Activated T-helper 2 cell treated with anti-CD3 and anti-CD28 coated beads, Interferon-gamma antibody, Interleukin-2, Interleukin-4, amounts not matched to agents 10 μg/mL and 5 μg/mL and 100 μg/mL, durations not matched to agents 14 hours and 24 hours and 36 hours (primary cell): ENCODE measurements at regions of chr4 and their contacts with region 1.

Region 1: DNA sequence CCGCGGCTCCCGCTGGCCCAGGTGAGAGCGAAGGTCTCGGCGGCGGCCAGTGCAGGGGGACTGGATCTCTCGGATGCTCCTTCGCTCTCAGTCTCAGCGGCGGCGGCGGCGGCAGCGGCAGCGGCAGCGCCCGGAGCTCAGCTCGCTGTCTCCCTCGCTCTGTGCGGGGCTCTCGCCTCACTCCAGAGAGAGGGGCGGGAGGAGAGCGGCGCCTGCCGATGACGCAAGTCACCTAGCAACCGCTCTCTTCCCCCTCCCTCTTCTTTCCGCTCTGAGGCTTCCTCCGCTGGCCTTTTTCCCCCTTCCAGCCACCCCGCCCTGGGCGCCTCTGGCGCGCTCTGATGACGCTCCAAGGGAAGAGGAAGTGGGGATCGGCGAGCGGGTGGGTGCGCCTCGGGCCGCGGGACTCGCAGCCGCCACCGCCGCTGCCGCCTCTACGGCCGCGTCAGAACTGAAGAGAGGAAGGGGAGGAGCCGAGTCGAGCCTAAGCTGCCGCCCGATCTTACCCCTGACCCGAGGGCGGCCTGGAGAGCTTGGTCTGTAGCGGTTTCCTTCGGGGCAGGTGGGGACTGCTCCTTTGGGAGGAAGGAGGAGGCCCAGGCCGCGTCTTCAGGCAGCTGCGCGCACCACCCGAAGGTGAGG is at the start of gene FBXW7:
- DNase-seq: peak; percentile 100
- H3K4me3 Mint-ChIP-seq: peak within 1 kb of the TSS; percentile 97
- H3K27ac Mint-ChIP-seq: peak within 1 kb of the TSS; percentile 99
- H3K4me1 Mint-ChIP-seq: peaks cover 50% of the 10 kb centered on the region
- H3K27me3 Mint-ChIP-seq: no peaks in the 10 kb centered on the region
- total RNA-seq, gene FBXW7: 37.8 and 47.3 TPM in 2 replicates

Region 2: DNA sequence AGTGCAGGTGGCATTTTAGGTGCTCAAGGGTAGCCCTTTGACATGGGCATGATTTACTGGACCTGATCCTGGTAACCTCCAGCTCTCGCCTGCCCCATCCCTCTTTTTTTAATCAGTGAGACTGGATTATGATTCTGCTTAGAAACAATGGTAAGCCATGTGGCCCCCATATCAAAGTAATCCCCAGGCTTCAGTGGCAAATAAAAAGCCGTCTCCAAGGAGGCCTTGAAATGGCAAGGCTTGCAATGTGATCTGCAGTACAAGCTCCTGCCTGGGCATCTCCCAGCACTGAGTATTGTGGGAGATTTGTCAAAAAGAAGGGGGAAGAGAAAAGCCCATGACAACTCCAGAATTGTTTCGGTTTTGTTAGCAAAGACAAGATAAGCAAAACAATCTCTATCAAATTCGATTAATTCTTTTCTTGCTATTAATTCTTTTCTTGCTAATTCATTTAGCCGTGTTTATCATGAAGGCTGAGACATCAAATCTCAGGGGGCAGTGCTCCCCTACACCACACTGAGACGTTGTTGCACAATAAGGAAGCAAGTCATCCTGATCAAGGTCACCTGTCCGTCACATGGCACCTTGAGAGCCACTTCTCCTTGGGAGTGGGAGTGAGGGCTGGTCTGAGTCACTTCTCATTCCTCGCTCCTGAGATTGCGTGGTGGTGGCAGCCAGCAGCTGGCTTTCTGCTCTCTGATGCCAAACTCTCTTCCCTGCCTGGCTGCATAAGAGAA is 462.5 kb before region 1 on chr4:
- intact Hi-C with region 1: no loop called
- DNase-seq: no peak
- H3K4me3 Mint-ChIP-seq: no peak overlapping the region
- H3K27ac Mint-ChIP-seq: no peak overlapping the region
- H3K4me1 Mint-ChIP-seq: peaks cover 7% of the 10 kb centered on the region
- H3K27me3 Mint-ChIP-seq: no peaks in the 10 kb centered on the region

Region 3: GRCh38 chr4:152454398-152455011 is 81.5 kb before region 1 on chr4:
- intact Hi-C with region 1: loop called (anchors 2 kb)
- DNase-seq: no peak
- H3K4me3 Mint-ChIP-seq: no peak overlapping the region
- H3K27ac Mint-ChIP-seq: no peak overlapping the region
- H3K4me1 Mint-ChIP-seq: peaks cover 27% of the 10 kb centered on the region
- H3K27me3 Mint-ChIP-seq: no peaks in the 10 kb centered on the region

Region 4: GRCh38 chr4:152500800-152501434 is 35.1 kb before region 1 on chr4:
- intact Hi-C with region 1: loop called (anchors 5 kb)
- DNase-seq: peak; percentile 30
- H3K4me3 Mint-ChIP-seq: no peak overlapping the region
- H3K27ac Mint-ChIP-seq: no peak overlapping the region
- H3K4me1 Mint-ChIP-seq: peaks cover 21% of the 10 kb centered on the region
- H3K27me3 Mint-ChIP-seq: no peaks in the 10 kb centered on the region

Region 5: DNA sequence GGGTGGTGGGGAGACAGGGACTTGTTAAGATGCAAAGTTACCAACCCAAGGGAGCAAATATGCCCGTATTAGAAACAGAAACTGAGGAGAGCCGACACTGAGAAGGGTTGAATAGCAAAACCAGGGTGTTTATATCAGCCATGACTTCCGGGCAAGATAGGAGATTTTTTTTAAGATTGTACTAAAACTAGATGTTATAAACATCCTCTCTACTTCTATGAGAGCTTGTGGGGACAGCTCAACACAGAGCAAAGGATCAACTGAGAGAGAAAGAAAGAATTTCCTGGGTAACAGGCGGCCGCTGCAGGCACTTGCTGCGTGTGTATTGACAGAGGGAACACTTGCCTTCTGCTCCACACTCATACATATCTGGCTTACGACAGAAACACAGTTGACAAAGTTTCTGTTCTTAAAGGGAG is 49.0 kb after region 1 on chr4:
- intact Hi-C with region 1: loop called (anchors 2 kb)
- DNase-seq: no peak
- H3K4me3 Mint-ChIP-seq: peak overlapping the region; percentile 54
- H3K27ac Mint-ChIP-seq: peak overlapping the region; percentile 67
- H3K4me1 Mint-ChIP-seq: peaks cover 6% of the 10 kb centered on the region
- H3K27me3 Mint-ChIP-seq: peaks cover 14% of the 10 kb centered on the region

Region 6: GRCh38 chr4:152779513-152780266 is 243.7 kb after region 1 on chr4 and contains the starts of genes ARFIP1 and TIGD4:
- intact Hi-C with region 1: loop called (anchors 1 kb)
- DNase-seq: peak; percentile 95
- H3K4me3 Mint-ChIP-seq: peak within 1 kb of the TSS; percentile 96
- H3K27ac Mint-ChIP-seq: peak within 1 kb of the TSS; percentile 94
- H3K4me1 Mint-ChIP-seq: peaks cover 42% of the 10 kb centered on the region
- H3K27me3 Mint-ChIP-seq: peaks cover 20% of the 10 kb centered on the region
- total RNA-seq, gene ARFIP1: 16.6 and 16.7 TPM in 2 replicates
- total RNA-seq, gene TIGD4: 0.23 and 0.28 TPM in 2 replicates